ENCODE measurements at regions of chr5 and their contacts with region 1.

Region 1: DNA sequence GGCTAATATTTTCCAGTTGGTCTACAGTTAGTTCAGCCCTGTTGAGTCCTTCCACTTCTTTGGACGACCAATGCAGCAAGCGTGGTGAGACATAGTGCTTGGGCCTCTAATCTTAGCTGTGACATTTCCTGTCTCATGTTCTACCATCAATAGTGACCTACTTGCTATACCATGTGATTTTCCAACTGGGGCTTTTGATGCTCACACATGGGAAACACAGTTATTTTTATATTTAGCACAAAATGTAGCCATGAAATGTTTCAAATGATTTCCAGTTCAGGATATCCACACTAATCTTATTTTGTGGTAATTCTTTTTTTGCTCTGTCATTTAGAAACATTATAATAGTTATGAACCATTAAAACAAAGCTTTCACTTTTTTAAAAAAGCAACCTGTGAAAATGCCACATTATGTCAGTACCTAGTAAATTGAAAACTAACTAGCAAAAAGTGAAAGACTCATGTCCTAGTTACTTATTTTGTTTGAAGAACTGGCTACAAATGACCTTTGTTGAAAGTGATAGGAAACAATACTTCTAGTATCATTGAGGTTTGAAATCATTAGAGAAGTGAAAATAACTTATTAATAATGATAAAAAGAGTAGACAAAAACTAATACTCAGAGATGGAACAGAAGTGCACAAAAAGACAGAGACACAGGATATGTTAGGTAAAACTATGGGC is 18.3 kb downstream of the MARCHF3 start:
- DNase-seq: peak; percentile 20
- ATAC-seq: no peak
- H3K4me3 ChIP-seq: no peak overlapping the region
- H3K27ac ChIP-seq: no peak overlapping the region
- H3K4me1 ChIP-seq: peaks cover 4% of the 10 kb centered on the region; the same call in 1 of the 2 replicates
- H3K27me3 ChIP-seq: no peaks in the 10 kb centered on the region
- CTCF ChIP-seq: no peak
- POLR2A ChIP-seq: no peak
- RAD21 ChIP-seq: no peak

Region 2: GRCh38 chr5:127025467-127025866 is 13.4 kb after region 1 on chr5:
- CTCF ChIA-PET with region 1: interaction called, 3 read pairs
- POLR2A ChIA-PET with region 1: no interaction called
- dilution Hi-C with region 1: no loop called
- in situ Hi-C with region 1: no loop called
- intact Hi-C with region 1: loop called (anchors 1 kb)
- DNase-seq: no peak
- ATAC-seq: no peak
- H3K4me3 ChIP-seq: no peak overlapping the region
- H3K27ac ChIP-seq: no peak overlapping the region
- H3K4me1 ChIP-seq: peaks cover 3% of the 10 kb centered on the region
- H3K27me3 ChIP-seq: no peaks in the 10 kb centered on the region
- CTCF ChIP-seq: no peak
- POLR2A ChIP-seq: no peak
- RAD21 ChIP-seq: no peak

Measured in IMR-90 (cell line).